Vagina (tissue), 2 donors: ENCODE measurements at regions of chr10 and their contacts with region 1.

Region 1: DNA sequence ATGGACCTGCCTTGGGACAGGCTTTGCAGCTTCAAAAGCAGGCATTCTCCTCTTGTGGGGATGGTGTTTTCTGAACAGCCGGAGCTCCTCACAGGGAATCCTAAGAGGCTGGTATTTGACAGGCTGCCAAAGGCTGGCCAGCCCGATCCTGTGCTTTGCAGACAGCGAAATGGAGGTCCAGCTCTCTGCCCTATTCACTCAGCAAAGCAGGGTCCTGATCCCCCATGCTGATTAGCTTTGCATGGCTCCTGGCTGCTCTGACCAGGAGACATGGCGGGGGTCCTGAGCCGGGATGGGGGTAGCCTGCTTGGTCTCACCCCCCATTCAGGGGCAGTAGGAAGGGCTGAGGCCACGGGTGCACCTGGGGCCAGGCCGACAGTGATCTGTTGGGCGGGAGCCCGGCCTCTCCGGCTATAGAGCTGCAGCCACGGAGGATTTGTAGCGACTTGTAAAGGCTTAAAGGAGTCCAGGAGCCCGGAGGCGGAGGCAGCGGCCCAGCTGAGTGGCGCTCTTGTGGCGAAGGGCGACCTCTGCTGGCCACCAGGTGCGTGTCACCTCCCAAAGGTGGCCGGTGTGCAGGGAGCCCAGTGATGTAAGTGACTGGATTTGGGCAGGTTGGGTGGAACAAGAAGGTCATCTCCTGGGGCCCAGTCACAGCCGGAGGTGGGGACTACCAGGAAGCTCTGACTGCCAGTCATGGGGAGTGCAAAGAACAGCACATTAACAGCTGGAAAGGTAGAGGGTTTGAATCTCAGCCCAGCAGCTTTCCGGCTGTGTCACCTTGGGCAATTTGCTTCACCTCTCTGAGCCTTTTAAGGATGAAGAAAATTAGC is 126.5 kb downstream of the ZMIZ1 start:
- DNase-seq: peak in 1 of 2 donors; percentile 95
- H3K4me3 ChIP-seq: peak overlapping the region in 1 of 2 donors; percentile 1
- H3K27ac ChIP-seq: peak overlapping the region; percentile 65
- H3K4me1 ChIP-seq: peaks cover 56% of the 10 kb centered on the region
- H3K27me3 ChIP-seq: no peaks in the 10 kb centered on the region
- CTCF ChIP-seq: peak; percentile 86 to 97 (median 94)
- POLR2A ChIP-seq: no peak

Region 2: GRCh38 chr10:78047314-78047891 is 1147.9 kb before region 1 on chr10:
- intact Hi-C with region 1: loop called (anchors 10 kb)
- DNase-seq: no peak
- H3K4me3 ChIP-seq: no peak overlapping the region
- H3K27ac ChIP-seq: peak overlapping the region; percentile 9
- H3K4me1 ChIP-seq: no peaks in the 10 kb centered on the region
- H3K27me3 ChIP-seq: no peaks in the 10 kb centered on the region
- CTCF ChIP-seq: peak; percentile 72 to 88 (median 88)
- POLR2A ChIP-seq: no peak

Region 3: DNA sequence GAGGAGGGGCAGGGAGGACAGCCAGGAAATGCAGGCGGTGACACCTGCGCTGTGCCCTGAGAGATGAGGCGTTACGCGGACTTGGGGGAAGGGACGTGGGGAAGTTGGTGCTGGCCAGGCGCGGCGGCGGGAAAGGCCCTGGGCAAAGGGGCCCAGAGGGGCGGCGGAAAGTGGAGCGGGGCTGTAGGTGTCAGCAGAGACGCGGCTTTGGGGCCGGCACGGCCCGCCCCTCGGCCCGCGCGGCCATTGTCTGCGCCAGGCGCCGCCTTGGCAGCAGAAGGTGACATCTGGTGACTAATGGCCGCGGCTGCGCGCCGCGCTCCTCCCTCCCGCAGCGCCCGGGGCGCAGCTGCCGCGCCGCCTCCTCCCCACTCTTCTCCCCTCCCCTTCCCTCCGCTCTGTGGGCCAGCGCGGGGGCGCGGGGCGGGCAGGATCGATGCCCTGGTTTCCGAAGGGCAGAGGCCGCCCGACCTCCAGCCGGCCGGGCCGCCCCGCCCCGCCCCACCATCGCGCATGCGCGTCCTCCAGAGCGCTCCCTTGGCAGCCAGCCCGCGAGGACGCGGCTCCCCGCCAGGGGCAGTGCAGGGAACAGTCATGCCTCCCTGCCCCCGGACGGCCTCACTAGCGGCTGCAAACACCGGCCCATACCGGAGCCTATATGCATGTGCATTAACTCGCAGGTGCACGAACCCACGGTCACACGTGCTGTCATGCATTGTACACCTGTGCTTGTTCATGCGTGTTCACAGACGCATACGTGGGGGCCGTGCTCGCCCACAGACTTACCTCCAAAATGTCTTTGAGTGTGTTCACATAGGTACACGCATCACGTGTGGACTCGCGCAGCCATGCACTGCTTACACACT is 892.1 kb before region 1 on chr10:
- intact Hi-C with region 1: loop called (anchors 5 kb)
- DNase-seq: peak; percentile 93 to 96
- H3K4me3 ChIP-seq: peak overlapping the region; percentile 56 to 61
- H3K27ac ChIP-seq: peak overlapping the region; percentile 84
- H3K4me1 ChIP-seq: peaks cover 12% of the 10 kb centered on the region
- H3K27me3 ChIP-seq: no peaks in the 10 kb centered on the region
- CTCF ChIP-seq: peak; percentile 12 to 76 (median 47)
- POLR2A ChIP-seq: peak in 1 of 2 donors; percentile 31

Region 4: DNA sequence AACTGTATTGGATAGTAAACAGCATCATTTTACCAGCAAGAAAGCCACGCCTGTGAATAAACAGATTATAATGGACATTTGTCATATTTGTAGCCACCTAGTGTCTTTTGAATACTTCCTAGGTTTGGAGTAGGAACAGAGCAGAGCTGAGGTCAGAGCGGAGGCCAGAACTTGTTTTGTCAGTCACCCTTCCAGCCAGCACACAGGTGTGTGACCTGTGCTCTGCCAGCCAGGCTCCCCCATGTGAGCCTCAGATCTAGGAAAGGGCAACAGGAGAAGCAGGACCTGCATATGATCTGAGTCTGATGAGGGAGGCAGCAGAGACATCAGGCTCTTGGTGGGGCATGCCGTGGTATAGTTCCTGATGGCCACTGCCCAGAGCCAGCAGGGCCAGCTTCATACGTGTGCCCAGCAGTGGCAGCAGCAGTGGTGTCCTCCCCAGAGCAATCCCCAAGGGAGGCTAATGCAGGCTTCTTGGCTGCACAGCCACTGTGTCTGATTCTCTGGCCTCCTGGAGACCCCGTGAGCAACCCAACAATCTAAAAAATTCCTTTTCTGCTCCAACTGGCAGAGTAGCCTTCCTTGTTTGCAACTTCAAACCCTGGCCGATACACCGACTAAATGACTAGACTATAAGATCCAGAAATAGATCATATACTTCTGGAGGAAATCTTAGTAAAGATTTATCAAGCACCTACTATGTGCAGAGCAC is 357.2 kb before region 1 on chr10:
- intact Hi-C with region 1: loop called (anchors 1 kb)
- DNase-seq: no peak
- H3K4me3 ChIP-seq: no peak overlapping the region
- H3K27ac ChIP-seq: no peak overlapping the region
- H3K4me1 ChIP-seq: no peaks in the 10 kb centered on the region
- H3K27me3 ChIP-seq: no peaks in the 10 kb centered on the region
- CTCF ChIP-seq: no peak
- POLR2A ChIP-seq: no peak

Region 5: DNA sequence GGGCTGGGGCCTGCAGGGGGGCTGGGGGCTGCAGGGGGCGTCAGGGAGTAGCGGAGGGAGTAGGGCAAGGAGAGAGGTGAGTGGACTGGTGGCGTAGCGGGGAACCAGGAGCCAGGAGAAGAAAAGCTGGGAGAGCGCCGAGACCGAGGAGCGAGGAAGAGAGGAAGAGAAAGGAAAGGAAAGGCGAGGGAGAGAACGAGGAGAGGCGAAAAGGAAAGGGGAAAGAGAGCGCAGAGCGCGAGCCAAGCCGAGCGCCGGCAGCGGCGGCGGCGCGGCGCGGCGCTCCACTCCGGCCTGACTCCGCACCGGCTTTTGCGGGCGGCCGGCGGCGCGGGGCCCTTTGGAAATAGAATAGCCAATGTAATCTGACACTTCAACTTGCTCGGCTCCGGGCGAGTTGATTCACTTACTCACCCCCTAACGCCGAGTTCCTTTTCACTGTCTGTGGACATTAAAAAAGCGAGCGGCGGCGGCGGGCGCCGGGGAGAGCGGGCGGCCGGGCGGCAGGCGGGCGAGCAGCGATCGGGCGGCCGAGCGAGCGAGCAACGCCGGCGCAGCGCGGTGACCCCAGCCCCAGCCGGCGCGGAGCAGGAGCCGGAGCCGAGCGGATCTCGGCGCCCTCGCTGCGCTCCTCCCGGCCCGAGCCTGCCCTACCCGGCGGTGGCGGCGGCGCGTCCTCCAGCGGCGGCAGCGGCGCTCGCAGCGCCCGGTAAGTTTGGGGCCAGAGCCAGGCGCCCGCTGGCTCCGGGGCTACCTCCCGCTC is 126.6 kb before region 1 on chr10 and contains the start of gene ZMIZ1:
- intact Hi-C with region 1: loop called (anchors 5 kb)
- DNase-seq: no peak
- H3K4me3 ChIP-seq: peak within 1 kb of the TSS; percentile 72 to 96
- H3K27ac ChIP-seq: peak within 1 kb of the TSS; percentile 97
- H3K4me1 ChIP-seq: peaks cover 34% of the 10 kb centered on the region
- H3K27me3 ChIP-seq: no peaks in the 10 kb centered on the region
- CTCF ChIP-seq: no peak
- POLR2A ChIP-seq: peak in 1 of 2 donors; percentile 93
- total RNA-seq, gene ZMIZ1: 61.4 TPM

Region 6: GRCh38 chr10:80924063-80924952 is 1729.0 kb after region 1 on chr10:
- intact Hi-C with region 1: no loop called
- DNase-seq: no peak
- H3K4me3 ChIP-seq: no peak overlapping the region
- H3K27ac ChIP-seq: no peak overlapping the region
- H3K4me1 ChIP-seq: no peaks in the 10 kb centered on the region
- H3K27me3 ChIP-seq: no peaks in the 10 kb centered on the region
- CTCF ChIP-seq: peak; percentile 8 to 51 (median 51)
- POLR2A ChIP-seq: no peak